ENCODE measurements at regions of chr16 and their contacts with region 1.

Region 1: GRCh38 chr16:84511180-84511824 is 6.8 kb upstream of the MEAK7 start:
- DNase-seq: peak; percentile 56 to 84 (median 82)
- H3K4me3 ChIP-seq: no peak overlapping the region
- H3K4me3 Mint-ChIP-seq: peak overlapping the region in 7 of 8 donors; percentile 2 to 73 (median 43)
- H3K27ac ChIP-seq: no peak overlapping the region
- H3K27ac Mint-ChIP-seq: peak overlapping the region; percentile 82 to 96 (median 91)
- H3K4me1 ChIP-seq: peaks cover 84% of the 10 kb centered on the region
- H3K4me1 Mint-ChIP-seq: peaks cover 51 to 78% (median 67%) of the 10 kb centered on the region in 4 donors
- H3K27me3 ChIP-seq: no peaks in the 10 kb centered on the region
- H3K27me3 Mint-ChIP-seq: no peaks in the 10 kb centered on the region

Region 2: DNA sequence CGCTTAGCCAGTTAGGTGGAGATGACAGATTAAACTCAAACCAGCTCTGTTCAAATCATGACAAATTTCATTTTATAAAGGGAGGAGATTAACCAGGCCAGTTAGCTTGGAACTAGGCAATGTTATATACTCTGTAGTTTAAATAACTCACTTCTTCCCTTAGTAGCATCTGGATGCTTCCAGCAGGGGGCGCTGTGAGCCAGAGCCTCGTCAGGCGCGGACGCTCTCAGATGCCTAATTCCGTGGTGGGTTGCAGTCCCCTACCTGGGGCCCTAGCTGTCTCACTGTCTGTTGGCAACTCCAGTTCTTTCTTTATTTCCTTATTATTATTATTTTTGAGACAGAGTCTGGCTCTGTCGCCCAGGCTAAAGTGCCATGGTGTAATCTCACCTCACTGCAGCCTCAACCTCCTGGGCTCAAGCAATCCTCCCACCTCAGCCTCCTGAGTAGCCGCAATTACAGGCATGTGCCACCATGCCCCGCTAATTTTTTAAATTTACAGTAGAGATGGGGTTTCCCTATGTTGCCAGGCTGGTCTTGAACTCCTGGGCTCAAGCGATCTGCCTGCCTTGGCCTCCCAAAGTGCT is 234.0 kb before region 1 on chr16:
- CTCF ChIA-PET with region 1: interaction called, 34 read pairs
- POLR2A ChIA-PET with region 1: interaction called, 3 read pairs
- intact Hi-C with region 1: no loop called
- DNase-seq: peak; percentile 45 to 59 (median 55)
- H3K4me3 ChIP-seq: no peak overlapping the region
- H3K4me3 Mint-ChIP-seq: no peak overlapping the region
- H3K27ac ChIP-seq: no peak overlapping the region
- H3K27ac Mint-ChIP-seq: no peak overlapping the region
- H3K4me1 ChIP-seq: no peaks in the 10 kb centered on the region
- H3K4me1 Mint-ChIP-seq: peaks cover 0 to 1% (median 0%) of the 10 kb centered on the region in 4 donors
- H3K27me3 ChIP-seq: peaks cover 3% of the 10 kb centered on the region
- H3K27me3 Mint-ChIP-seq: peaks cover 10 to 18% of the 10 kb centered on the region in 2 donors

Region 3: GRCh38 chr16:84555418-84556195 is 44.3 kb after region 1 on chr16:
- CTCF ChIA-PET with region 1: interaction called, 23 read pairs
- POLR2A ChIA-PET with region 1: interaction called, 56 read pairs
- intact Hi-C with region 1: no loop called
- DNase-seq: no peak
- H3K4me3 ChIP-seq: no peak overlapping the region
- H3K4me3 Mint-ChIP-seq: peak overlapping the region in 2 of 8 donors; percentile 11 to 24
- H3K27ac ChIP-seq: no peak overlapping the region
- H3K27ac Mint-ChIP-seq: peak overlapping the region in 5 of 7 donors; percentile 55 to 87 (median 86)
- H3K4me1 ChIP-seq: peaks cover 49% of the 10 kb centered on the region
- H3K4me1 Mint-ChIP-seq: peaks cover 30 to 51% (median 42%) of the 10 kb centered on the region in 4 donors
- H3K27me3 ChIP-seq: no peaks in the 10 kb centered on the region
- H3K27me3 Mint-ChIP-seq: no peaks in the 10 kb centered on the region

Region 4: GRCh38 chr16:84599521-84600202 is 88.4 kb after region 1 on chr16:
- CTCF ChIA-PET with region 1: interaction called, 37 read pairs
- POLR2A ChIA-PET with region 1: interaction called, 104 read pairs
- intact Hi-C with region 1: loop called (anchors 2 kb)
- DNase-seq: peak in 4 of 5 donors; percentile 37 to 72 (median 48)
- H3K4me3 ChIP-seq: peak overlapping the region; percentile 57
- H3K4me3 Mint-ChIP-seq: peak overlapping the region; percentile 82 to 92 (median 88)
- H3K27ac ChIP-seq: peak overlapping the region; percentile 89
- H3K27ac Mint-ChIP-seq: peak overlapping the region; percentile 94 to 98 (median 95)
- H3K4me1 ChIP-seq: peaks cover 97% of the 10 kb centered on the region
- H3K4me1 Mint-ChIP-seq: peaks cover 72 to 96% (median 84%) of the 10 kb centered on the region in 4 donors
- H3K27me3 ChIP-seq: no peaks in the 10 kb centered on the region
- H3K27me3 Mint-ChIP-seq: no peaks in the 10 kb centered on the region

Region 5: DNA sequence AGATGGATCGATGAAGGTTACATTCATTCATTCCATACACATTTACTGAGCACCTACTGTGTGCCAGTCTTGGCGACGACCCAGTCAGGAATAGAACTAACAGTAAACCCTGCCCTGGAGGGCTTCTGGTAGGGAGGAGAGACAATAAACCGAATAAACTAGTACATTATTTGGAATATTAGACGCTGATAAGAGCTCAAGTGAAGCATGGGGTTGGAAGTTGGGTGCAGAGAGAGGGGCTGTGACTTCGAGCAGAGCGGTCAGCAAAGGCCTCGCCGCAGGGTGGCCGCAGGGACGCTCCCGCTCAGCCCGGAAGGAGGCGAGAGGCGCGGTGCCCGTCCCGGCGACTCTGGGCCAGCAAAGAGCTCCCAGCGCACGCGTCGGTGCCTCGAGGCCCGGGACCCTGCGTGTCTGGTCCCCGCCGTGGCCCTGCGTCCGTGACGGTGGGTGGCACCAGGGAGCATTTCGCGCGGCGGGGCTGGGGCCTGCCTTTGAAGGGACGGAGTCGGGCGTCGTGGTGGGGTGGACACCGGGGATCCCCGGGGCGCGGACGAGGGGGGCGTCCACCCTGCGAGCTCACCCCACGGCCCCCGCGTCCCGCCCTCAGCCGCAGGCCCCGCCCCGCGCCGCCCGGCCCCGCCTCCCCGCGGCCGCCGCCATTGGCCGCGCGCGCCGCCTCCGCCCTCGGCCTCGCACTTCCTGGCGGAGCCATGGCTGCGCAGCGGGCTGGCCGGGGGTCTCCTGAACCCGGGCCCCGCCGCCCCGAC is 136.7 kb after region 1 on chr16 and contains the start of gene KLHL36:
- CTCF ChIA-PET with region 1: interaction called, 5 read pairs
- POLR2A ChIA-PET with region 1: interaction called, 28 read pairs
- intact Hi-C with region 1: no loop called
- DNase-seq: peak; percentile 68 to 76 (median 72)
- H3K4me3 ChIP-seq: peak within 1 kb of the TSS; percentile 32 to 75
- H3K4me3 Mint-ChIP-seq: peak within 1 kb of the TSS; percentile 86 to 96 (median 94)
- H3K27ac ChIP-seq: peak within 1 kb of the TSS; percentile 62
- H3K27ac Mint-ChIP-seq: peak within 1 kb of the TSS; percentile 86 to 97 (median 96)
- H3K4me1 ChIP-seq: peaks cover 47% of the 10 kb centered on the region
- H3K4me1 Mint-ChIP-seq: peaks cover 30 to 53% (median 41%) of the 10 kb centered on the region in 4 donors
- H3K27me3 ChIP-seq: no peaks in the 10 kb centered on the region
- H3K27me3 Mint-ChIP-seq: no peaks in the 10 kb centered on the region
- total RNA-seq, gene KLHL36: 131 to 149 TPM

Measured in CD4-positive, alpha-beta memory T cell (primary cell).